ENCODE measurements at regions of chr2 and their contacts with region 1.

Region 1: DNA sequence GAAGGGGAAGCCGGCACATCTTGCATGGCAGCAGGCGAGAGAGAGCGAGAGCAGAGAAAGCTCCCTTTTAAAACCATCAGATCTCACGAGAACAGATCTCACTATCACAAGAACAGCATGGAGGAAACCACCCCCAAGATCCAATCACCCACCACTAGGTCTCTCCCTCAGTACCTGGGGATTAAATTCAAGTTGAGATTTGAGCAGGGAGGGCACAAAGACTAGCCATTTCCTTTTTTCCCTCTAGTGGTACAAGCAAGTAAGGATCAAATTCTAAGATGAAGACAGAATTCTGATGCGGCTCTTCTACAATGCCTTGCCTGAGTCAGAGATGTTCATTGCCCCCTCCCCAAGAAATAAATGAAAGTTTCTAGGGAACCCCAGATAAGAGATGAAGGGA is 45.6 kb upstream of the ANKRD44 start:
- DNase-seq: peak in 4 of 5 donors; percentile 7 to 28 (median 21)
- H3K4me3 ChIP-seq: no peak overlapping the region
- H3K4me3 Mint-ChIP-seq: peak overlapping the region in 6 of 8 donors; percentile 33 to 77 (median 48)
- H3K27ac ChIP-seq: no peak overlapping the region
- H3K27ac Mint-ChIP-seq: peak overlapping the region in 2 of 7 donors; percentile 40 to 66
- H3K4me1 ChIP-seq: peaks cover 12% of the 10 kb centered on the region
- H3K4me1 Mint-ChIP-seq: peaks cover 12 to 21% (median 16%) of the 10 kb centered on the region in 4 donors
- H3K27me3 ChIP-seq: no peaks in the 10 kb centered on the region
- H3K27me3 Mint-ChIP-seq: no peaks in the 10 kb centered on the region

Region 2: DNA sequence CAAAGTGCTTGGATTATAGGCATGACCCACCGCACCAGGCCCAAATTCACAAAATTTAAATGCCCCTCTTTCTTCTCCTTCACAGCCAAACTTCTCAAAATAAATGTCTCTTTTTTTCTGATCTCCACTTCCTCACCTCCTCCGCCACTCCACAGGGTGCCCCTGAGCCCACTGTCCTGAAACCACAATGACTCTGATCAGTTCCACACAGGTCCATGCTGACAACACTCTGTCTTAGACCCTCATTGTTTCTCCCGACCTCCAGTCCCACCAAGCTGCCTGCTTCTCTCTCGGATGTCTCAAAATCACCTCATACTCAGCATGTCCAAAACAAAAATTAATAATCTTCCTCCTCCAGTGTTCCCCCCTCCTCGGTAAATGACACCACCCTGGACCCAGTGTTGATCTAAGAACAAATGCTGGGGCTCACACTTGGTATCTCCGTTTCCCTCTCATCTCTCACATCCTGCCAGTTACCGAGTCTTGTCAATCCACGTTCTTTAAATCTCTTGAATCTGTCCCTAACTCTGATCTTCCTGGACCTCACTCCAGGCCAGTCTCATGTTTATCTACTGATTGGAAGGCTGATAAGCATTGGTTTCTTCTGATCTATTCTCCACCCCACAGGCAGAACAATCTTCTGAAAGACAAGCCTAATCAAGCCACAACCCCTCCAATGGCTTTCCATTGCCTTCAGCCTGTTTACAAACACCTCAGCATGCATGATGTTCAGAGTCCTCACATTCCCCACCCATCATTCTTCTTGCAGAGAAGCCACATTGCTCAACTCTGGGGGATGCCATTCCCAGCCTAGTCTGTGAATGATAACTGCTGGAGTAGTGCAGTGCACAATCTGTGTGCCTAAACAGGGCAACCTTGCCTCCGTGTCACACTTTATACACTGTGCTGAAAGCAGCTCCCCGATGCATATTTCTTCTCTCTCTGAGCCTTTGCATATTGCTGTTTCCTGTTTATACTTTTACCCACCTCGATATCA is 33.1 kb before region 1 on chr2:
- CTCF ChIA-PET with region 1: interaction called, 21 read pairs
- POLR2A ChIA-PET with region 1: interaction called, 4 read pairs
- intact Hi-C with region 1: loop called (anchors 2 kb)
- DNase-seq: peak in 3 of 5 donors; percentile 36 to 41 (median 36)
- H3K4me3 ChIP-seq: peak overlapping the region; percentile 44 to 48
- H3K4me3 Mint-ChIP-seq: peak overlapping the region; percentile 49 to 86 (median 76)
- H3K27ac ChIP-seq: peak overlapping the region; percentile 36
- H3K27ac Mint-ChIP-seq: peak overlapping the region; percentile 82 to 97 (median 94)
- H3K4me1 ChIP-seq: peaks cover 67% of the 10 kb centered on the region
- H3K4me1 Mint-ChIP-seq: peaks cover 40 to 71% (median 61%) of the 10 kb centered on the region in 4 donors
- H3K27me3 ChIP-seq: no peaks in the 10 kb centered on the region
- H3K27me3 Mint-ChIP-seq: no peaks in the 10 kb centered on the region

Measured in CD4-positive, alpha-beta memory T cell (primary cell).